ENCODE measurements at regions of chr17 and their contacts with region 1.

Region 1: DNA sequence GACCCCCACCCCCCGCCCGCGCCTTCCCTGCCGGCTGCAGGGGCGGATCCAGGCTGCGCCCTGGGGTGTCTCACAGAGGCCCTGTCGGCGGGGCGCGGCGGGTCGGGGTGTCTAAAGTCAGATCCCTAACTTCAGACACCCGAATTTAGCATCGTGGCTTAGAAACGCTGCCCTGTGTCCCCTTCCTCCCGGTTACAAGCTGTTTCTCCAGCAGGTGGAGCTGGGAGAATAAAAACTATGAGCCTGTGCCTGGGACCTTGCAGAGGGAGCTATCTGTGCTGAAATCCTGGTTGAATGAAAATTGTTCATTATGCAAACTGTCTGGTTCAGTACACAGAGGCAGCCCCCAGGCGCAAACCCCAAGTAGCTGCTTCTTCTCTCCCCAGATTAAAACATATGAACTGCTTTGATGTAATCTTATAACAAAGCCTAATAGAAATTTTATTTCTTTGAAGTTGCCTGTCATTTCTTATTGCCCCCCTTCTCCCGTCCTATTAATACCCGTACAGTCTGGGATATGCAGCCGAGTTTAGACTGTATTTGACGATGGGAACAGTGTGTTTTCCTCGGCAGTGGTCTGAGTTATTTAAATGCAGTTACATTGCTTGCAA is 79.0 kb downstream of the RPA1 start:
- DNase-seq: peak in 4 of 5 donors; percentile 82 to 94 (median 88)
- H3K4me3 ChIP-seq: peak overlapping the region in 1 of 3 donors; percentile 35
- H3K27ac ChIP-seq: no peak overlapping the region
- H3K4me1 ChIP-seq: peaks cover 0 to 11% (median 9%) of the 10 kb centered on the region in 3 donors
- H3K27me3 ChIP-seq: peaks cover 26% of the 10 kb centered on the region
- CTCF ChIP-seq: peak; percentile 80

Region 2: GRCh38 chr17:2029911-2030778 is 121.3 kb after region 1 on chr17 and contains the start of gene DPH1:
- intact Hi-C with region 1: loop called (anchors 5 kb)
- DNase-seq: peak; percentile 90 to 96 (median 94)
- H3K4me3 ChIP-seq: peak within 1 kb of the TSS; percentile 55 to 94 (median 91)
- H3K27ac ChIP-seq: peak within 1 kb of the TSS; percentile 25 to 62
- H3K4me1 ChIP-seq: peaks cover 0 to 12% (median 6%) of the 10 kb centered on the region in 3 donors
- H3K27me3 ChIP-seq: no peaks in the 10 kb centered on the region
- CTCF ChIP-seq: peak; percentile 20
- total RNA-seq, gene DPH1: 49.4 TPM

Region 3: GRCh38 chr17:2041561-2042366 is 133.0 kb after region 1 on chr17 and contains the start of gene OVCA2:
- intact Hi-C with region 1: loop called (anchors 5 kb)
- DNase-seq: peak; percentile 97 to 98 (median 98)
- H3K4me3 ChIP-seq: peak within 1 kb of the TSS; percentile 90 to 96 (median 95)
- H3K27ac ChIP-seq: peak within 1 kb of the TSS; percentile 88 to 94
- H3K4me1 ChIP-seq: peaks cover 0 to 17% (median 15%) of the 10 kb centered on the region in 3 donors
- H3K27me3 ChIP-seq: no peaks in the 10 kb centered on the region
- CTCF ChIP-seq: peak; percentile 64
- total RNA-seq, gene OVCA2: 22.9 TPM

Region 4: GRCh38 chr17:2111719-2112118 is 202.9 kb after region 1 on chr17:
- intact Hi-C with region 1: no loop called
- DNase-seq: peak in 1 of 5 donors; percentile 62
- H3K4me3 ChIP-seq: no peak overlapping the region
- H3K27ac ChIP-seq: no peak overlapping the region
- H3K4me1 ChIP-seq: peaks cover 0 to 7% (median 3%) of the 10 kb centered on the region in 3 donors
- H3K27me3 ChIP-seq: no peaks in the 10 kb centered on the region
- CTCF ChIP-seq: no peak

Measured in kidney (tissue), 22 donors.